CD4-positive, alpha-beta memory T cell (primary cell): ENCODE measurements at regions of chr11 and their contacts with region 1.

Region 1: GRCh38 chr11:63536669-63537292 is at the start of gene PLAAT4:
- DNase-seq: peak; percentile 54 to 69 (median 59)
- H3K4me3 ChIP-seq: peak within 1 kb of the TSS; percentile 83 to 89
- H3K4me3 Mint-ChIP-seq: peak within 1 kb of the TSS; percentile 95 to 99 (median 96)
- H3K27ac ChIP-seq: peak within 1 kb of the TSS; percentile 77
- H3K27ac Mint-ChIP-seq: peak within 1 kb of the TSS; percentile 96 to 99 (median 98)
- H3K4me1 ChIP-seq: peaks cover 93% of the 10 kb centered on the region
- H3K4me1 Mint-ChIP-seq: peaks cover 63 to 97% (median 82%) of the 10 kb centered on the region in 4 donors
- H3K27me3 ChIP-seq: no peaks in the 10 kb centered on the region
- H3K27me3 Mint-ChIP-seq: no peaks in the 10 kb centered on the region
- total RNA-seq, gene PLAAT4: 152 to 167 TPM

Region 2: DNA sequence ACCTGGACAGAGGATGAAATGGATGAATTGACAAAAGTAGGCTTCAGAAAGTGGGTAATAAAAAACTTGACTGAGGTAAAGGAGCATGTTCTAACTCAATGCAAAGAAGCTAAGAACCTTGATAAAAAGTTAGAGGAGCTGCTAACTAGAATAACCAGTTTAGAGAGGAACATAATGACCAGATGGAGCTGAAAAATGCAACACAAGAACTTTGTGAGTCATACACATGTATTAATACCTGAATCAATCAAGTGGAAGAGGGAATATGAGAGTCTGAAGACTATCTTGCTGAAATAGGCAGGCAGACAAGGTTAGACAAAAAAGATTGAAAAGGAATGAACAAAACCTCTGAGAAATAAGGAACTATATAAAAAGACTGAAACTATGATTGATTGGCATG is 215.1 kb before region 1 on chr11:
- CTCF ChIA-PET with region 1: no interaction called
- POLR2A ChIA-PET with region 1: no interaction called
- intact Hi-C with region 1: no loop called
- DNase-seq: no peak
- H3K4me3 ChIP-seq: no peak overlapping the region
- H3K4me3 Mint-ChIP-seq: no peak overlapping the region
- H3K27ac ChIP-seq: no peak overlapping the region
- H3K27ac Mint-ChIP-seq: no peak overlapping the region
- H3K4me1 ChIP-seq: no peaks in the 10 kb centered on the region
- H3K4me1 Mint-ChIP-seq: peaks cover 0 to 1% (median 0%) of the 10 kb centered on the region in 4 donors
- H3K27me3 ChIP-seq: no peaks in the 10 kb centered on the region
- H3K27me3 Mint-ChIP-seq: peaks cover 0 to 5% of the 10 kb centered on the region in 2 donors

Region 3: GRCh38 chr11:63518548-63518947 is 18.2 kb before region 1 on chr11:
- CTCF ChIA-PET with region 1: interaction called, 11 read pairs
- POLR2A ChIA-PET with region 1: interaction called, 101 read pairs
- intact Hi-C with region 1: loop called (anchors 1 kb)
- DNase-seq: peak in 4 of 5 donors; percentile 41 to 58 (median 48)
- H3K4me3 ChIP-seq: no peak overlapping the region
- H3K4me3 Mint-ChIP-seq: peak overlapping the region in 7 of 8 donors; percentile 15 to 55 (median 50)
- H3K27ac ChIP-seq: peak overlapping the region; percentile 3
- H3K27ac Mint-ChIP-seq: peak overlapping the region; percentile 65 to 93 (median 76)
- H3K4me1 ChIP-seq: peaks cover 18% of the 10 kb centered on the region
- H3K4me1 Mint-ChIP-seq: peaks cover 18 to 35% (median 26%) of the 10 kb centered on the region in 4 donors
- H3K27me3 ChIP-seq: no peaks in the 10 kb centered on the region
- H3K27me3 Mint-ChIP-seq: no peaks in the 10 kb centered on the region

Region 4: GRCh38 chr11:63567044-63567840 is 30.5 kb after region 1 on chr11:
- CTCF ChIA-PET with region 1: interaction called, 5 read pairs
- POLR2A ChIA-PET with region 1: interaction called, 31 read pairs
- intact Hi-C with region 1: loop called (anchors 2 kb)
- DNase-seq: peak; percentile 80 to 96 (median 90)
- H3K4me3 ChIP-seq: no peak overlapping the region
- H3K4me3 Mint-ChIP-seq: peak overlapping the region; percentile 23 to 79 (median 64)
- H3K27ac ChIP-seq: peak overlapping the region; percentile 74
- H3K27ac Mint-ChIP-seq: peak overlapping the region; percentile 90 to 99 (median 96)
- H3K4me1 ChIP-seq: peaks cover 44% of the 10 kb centered on the region
- H3K4me1 Mint-ChIP-seq: peaks cover 32 to 46% (median 36%) of the 10 kb centered on the region in 4 donors
- H3K27me3 ChIP-seq: no peaks in the 10 kb centered on the region
- H3K27me3 Mint-ChIP-seq: no peaks in the 10 kb centered on the region

Region 5: DNA sequence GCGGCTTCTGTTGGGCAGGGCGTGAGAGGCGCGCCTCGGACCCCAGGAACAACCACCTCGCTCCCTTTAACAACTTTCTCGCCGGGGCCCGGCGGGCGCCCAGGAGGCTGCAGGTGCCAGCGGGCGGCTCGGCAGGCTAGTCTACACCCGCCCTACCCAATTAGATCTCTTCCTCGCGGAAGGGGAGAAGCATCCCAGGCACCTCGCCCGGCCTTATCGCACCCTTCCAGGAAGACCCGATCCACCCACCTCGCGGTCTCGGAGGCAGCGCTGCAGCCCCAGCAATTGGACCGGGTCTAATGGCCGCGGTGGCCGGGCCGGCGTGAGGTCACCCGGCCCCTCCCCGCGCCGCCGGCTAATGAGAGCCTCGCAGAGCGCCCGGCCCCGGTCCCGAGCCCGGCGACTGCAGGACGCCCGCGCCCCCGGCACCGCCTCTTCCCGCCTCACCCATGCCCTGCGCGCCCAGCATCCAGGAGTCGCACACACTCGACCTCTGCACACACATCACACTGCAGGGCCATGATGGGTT is 77.4 kb after region 1 on chr11 and contains the start of gene PLAAT3:
- CTCF ChIA-PET with region 1: no interaction called
- POLR2A ChIA-PET with region 1: interaction called, 8 read pairs
- intact Hi-C with region 1: loop called (anchors 5 kb)
- DNase-seq: peak; percentile 16 to 40 (median 19)
- H3K4me3 ChIP-seq: peak within 1 kb of the TSS; percentile 47 to 67
- H3K4me3 Mint-ChIP-seq: peak within 1 kb of the TSS; percentile 87 to 93 (median 89)
- H3K27ac ChIP-seq: peak within 1 kb of the TSS; percentile 47
- H3K27ac Mint-ChIP-seq: peak within 1 kb of the TSS; percentile 73 to 88 (median 80)
- H3K4me1 ChIP-seq: no peaks in the 10 kb centered on the region
- H3K4me1 Mint-ChIP-seq: peaks cover 9 to 33% (median 22%) of the 10 kb centered on the region in 4 donors
- H3K27me3 ChIP-seq: no peaks in the 10 kb centered on the region
- H3K27me3 Mint-ChIP-seq: no peaks in the 10 kb centered on the region
- total RNA-seq, gene PLAAT3: 3.6 to 4.7 TPM